Activated T-helper 1 cell treated with anti-CD3 and anti-CD28 coated beads, Interleukin-12 subunit alpha, Interleukin-12 subunit beta, Interleukin-2, Interleukin-4 antibody, amounts not matched to agents 30 ng/mL and 10 ng/mL and 1 ng/mL, durations not matched to agents 14 hours and 24 hours and 36 hours (primary cell): ENCODE measurements at regions of chr2 and their contacts with region 1.

Region 1: GRCh38 chr2:225041851-225042799 is at the start of gene DOCK10:
- DNase-seq: peak; percentile 50
- H3K4me3 Mint-ChIP-seq: peak within 1 kb of the TSS; percentile 96
- H3K27ac Mint-ChIP-seq: peak within 1 kb of the TSS; percentile 98
- H3K4me1 Mint-ChIP-seq: peaks cover 58% of the 10 kb centered on the region
- H3K27me3 Mint-ChIP-seq: peaks cover 5% of the 10 kb centered on the region
- total RNA-seq, gene DOCK10: 144 and 159 TPM in 2 replicates

Region 2: GRCh38 chr2:224520064-224520463 is 522.1 kb before region 1 on chr2:
- intact Hi-C with region 1: loop called (anchors 10 kb)
- DNase-seq: peak; percentile 16
- H3K4me3 Mint-ChIP-seq: no peak overlapping the region
- H3K27ac Mint-ChIP-seq: peak overlapping the region; percentile 68
- H3K4me1 Mint-ChIP-seq: peaks cover 48% of the 10 kb centered on the region
- H3K27me3 Mint-ChIP-seq: no peaks in the 10 kb centered on the region

Region 3: DNA sequence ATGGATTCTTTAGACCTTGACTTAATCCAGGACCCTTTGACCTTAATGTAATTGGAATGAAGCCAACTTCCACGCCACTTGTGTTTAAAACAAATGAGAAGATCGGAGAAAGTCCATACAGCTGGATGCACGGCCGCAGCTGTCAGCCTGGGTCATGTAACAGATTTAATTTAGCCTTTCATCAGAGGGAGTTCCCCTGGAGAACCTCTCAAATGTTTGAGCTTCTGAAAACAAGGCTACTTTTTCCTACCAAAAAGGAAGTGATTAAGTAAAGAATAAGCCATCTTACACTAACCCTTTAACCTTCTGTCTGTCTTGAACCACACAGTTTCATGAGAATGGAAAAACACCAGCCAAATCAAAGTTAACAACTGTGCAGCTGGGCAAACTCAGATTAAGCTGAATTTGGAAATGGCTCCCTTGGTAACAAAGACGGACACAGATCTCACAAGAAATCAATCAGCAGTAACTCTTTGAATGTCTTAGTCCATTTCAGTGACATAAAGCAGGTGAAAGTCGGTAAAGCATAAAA is 103.4 kb before region 1 on chr2:
- intact Hi-C with region 1: loop called (anchors 1 kb)
- DNase-seq: no peak
- H3K4me3 Mint-ChIP-seq: peak overlapping the region; percentile 81
- H3K27ac Mint-ChIP-seq: peak overlapping the region; percentile 91
- H3K4me1 Mint-ChIP-seq: peaks cover 81% of the 10 kb centered on the region
- H3K27me3 Mint-ChIP-seq: no peaks in the 10 kb centered on the region

Region 4: GRCh38 chr2:225002039-225002655 is 40.0 kb before region 1 on chr2:
- intact Hi-C with region 1: loop called (anchors 1 kb)
- DNase-seq: peak; percentile 42
- H3K4me3 Mint-ChIP-seq: no peak overlapping the region
- H3K27ac Mint-ChIP-seq: peak overlapping the region; percentile 80
- H3K4me1 Mint-ChIP-seq: peaks cover 87% of the 10 kb centered on the region
- H3K27me3 Mint-ChIP-seq: no peaks in the 10 kb centered on the region

Region 5: GRCh38 chr2:225052703-225053102 is 10.6 kb after region 1 on chr2:
- intact Hi-C with region 1: loop called (anchors 1 kb)
- DNase-seq: peak; percentile 50
- H3K4me3 Mint-ChIP-seq: peak overlapping the region; percentile 29
- H3K27ac Mint-ChIP-seq: peak overlapping the region; percentile 95
- H3K4me1 Mint-ChIP-seq: peaks cover 69% of the 10 kb centered on the region
- H3K27me3 Mint-ChIP-seq: peaks cover 7% of the 10 kb centered on the region

Region 6: GRCh38 chr2:225124311-225125017 is 82.3 kb after region 1 on chr2:
- intact Hi-C with region 1: no loop called
- DNase-seq: no peak
- H3K4me3 Mint-ChIP-seq: no peak overlapping the region
- H3K27ac Mint-ChIP-seq: no peak overlapping the region
- H3K4me1 Mint-ChIP-seq: no peaks in the 10 kb centered on the region
- H3K27me3 Mint-ChIP-seq: peaks cover 3% of the 10 kb centered on the region

Region 7: DNA sequence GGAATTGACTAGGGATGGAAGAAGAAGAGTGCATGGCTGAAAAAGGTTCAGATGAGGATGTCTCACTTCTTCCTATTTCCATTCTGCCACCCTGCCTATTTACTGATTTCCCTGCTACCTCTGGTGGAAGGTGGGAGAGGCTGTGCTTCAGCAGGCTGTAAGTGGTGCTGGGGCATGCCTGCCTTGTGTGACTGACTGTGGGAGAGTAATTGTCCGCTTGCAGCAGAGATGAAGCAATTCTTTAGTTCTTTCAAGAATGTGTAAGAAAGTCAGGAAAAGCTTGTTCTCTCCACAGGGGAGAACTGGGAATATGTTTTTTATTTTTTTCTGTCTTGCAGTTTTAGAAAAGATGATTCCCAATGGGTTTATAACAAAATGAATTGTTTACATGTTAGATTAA is 284.8 kb after region 1 on chr2:
- intact Hi-C with region 1: no loop called
- DNase-seq: no peak
- H3K4me3 Mint-ChIP-seq: no peak overlapping the region
- H3K27ac Mint-ChIP-seq: no peak overlapping the region
- H3K4me1 Mint-ChIP-seq: no peaks in the 10 kb centered on the region
- H3K27me3 Mint-ChIP-seq: no peaks in the 10 kb centered on the region